ENCODE measurements at regions of chr20 and their contacts with region 1.

Region 1: DNA sequence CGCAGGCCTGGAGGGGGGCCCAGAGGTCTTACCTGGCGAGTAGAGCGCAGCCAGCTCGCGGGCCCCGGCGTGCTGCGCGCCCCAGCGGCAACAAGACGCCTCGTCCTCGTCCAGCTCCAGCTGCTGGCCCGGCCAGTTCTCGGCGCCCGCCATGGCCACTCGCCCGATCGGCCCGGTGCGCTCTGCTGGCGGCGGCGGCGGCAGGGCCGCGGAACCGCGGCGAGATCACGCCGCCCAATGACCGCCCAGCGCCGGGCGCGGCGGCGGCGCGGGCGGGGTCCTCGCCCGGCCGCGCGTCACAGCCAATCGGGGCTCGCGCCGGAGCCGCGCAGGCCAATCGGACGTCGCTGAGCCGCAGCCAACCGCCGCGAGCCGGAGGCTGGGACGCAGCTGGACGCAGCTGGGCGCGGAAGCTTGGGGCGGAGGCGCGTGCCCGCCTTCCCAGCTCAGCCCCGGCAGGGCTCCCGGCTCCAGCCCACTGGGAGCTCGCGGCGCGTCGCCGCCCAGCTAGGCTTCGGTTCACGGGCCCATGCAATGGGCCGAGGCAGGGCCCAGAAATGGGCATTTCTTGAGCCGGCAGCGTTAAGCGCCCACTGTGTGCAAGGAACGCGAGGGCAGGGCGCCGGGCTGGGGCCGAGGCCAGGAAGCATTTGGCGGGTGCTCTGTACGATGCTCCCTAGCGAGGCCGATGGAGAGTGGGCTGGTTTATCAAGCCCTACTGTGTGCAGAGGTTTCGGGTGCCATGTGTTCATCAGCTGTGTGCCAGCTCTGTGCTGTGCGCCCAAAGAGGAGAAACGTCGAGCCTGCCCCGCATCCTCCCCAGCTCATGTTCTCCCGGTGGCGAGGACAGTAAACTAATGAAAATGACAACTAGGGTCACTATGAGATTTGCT is at the start of gene PEDS1:
- DNase-seq: peak; percentile 85
- H3K4me3 Mint-ChIP-seq: peak within 1 kb of the TSS; percentile 87
- H3K27ac Mint-ChIP-seq: peak within 1 kb of the TSS; percentile 94
- H3K4me1 Mint-ChIP-seq: peaks cover 44% of the 10 kb centered on the region
- H3K27me3 Mint-ChIP-seq: no peaks in the 10 kb centered on the region
- CTCF ChIP-seq: no peak
- total RNA-seq, gene PEDS1: 26.0 and 30.5 TPM in 2 replicates

Region 2: DNA sequence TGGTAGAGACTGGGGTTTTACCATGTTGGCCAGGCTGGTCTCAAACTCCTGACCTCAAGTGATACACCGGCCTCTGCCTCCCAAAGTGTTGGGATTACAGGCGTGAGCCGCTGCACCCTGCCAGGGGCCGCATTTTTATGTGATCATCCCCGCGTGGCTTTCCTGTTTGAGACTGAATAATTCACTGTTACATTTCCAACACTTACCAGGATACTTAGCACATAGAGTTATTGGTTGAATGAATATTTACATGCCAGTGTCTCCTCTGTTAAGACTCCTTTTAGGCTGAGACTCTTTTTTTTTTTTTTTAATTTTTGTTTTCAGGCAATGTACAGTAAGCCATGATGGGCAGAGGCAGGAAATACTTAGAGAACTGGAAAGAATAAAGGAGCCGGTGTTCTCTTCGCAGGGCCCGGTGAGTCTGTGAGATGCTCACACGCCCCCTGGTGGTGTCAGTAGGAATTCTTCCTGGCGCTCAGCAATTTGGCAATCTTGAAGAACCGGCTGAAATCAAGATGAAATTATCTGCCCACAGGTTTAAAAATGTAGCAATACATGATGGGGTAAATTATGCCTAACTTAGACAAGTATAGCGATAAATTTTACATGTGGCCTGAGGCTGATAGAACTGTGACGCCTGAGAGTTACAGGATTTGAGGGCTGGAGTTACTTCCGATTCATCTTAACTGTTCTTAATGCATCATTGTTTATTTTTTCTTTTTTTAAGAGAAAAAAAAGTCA is 225.2 kb before region 1 on chr20:
- CTCF ChIA-PET with region 1: no interaction called
- POLR2A ChIA-PET with region 1: no interaction called
- intact Hi-C with region 1: no loop called
- DNase-seq: peak; percentile 84
- H3K4me3 Mint-ChIP-seq: no peak overlapping the region
- H3K27ac Mint-ChIP-seq: no peak overlapping the region
- H3K4me1 Mint-ChIP-seq: no peaks in the 10 kb centered on the region
- H3K27me3 Mint-ChIP-seq: no peaks in the 10 kb centered on the region
- CTCF ChIP-seq: peak; percentile 80

Region 3: GRCh38 chr20:50101281-50101680 is 52.5 kb before region 1 on chr20:
- CTCF ChIA-PET with region 1: interaction called, 10 read pairs
- POLR2A ChIA-PET with region 1: interaction called, 30 read pairs
- intact Hi-C with region 1: no loop called
- DNase-seq: no peak
- H3K4me3 Mint-ChIP-seq: no peak overlapping the region
- H3K27ac Mint-ChIP-seq: no peak overlapping the region
- H3K4me1 Mint-ChIP-seq: peaks cover 31% of the 10 kb centered on the region
- H3K27me3 Mint-ChIP-seq: no peaks in the 10 kb centered on the region
- CTCF ChIP-seq: no peak

Region 4: GRCh38 chr20:50138479-50139393 is 15.0 kb before region 1 on chr20:
- CTCF ChIA-PET with region 1: interaction called, 38 read pairs
- POLR2A ChIA-PET with region 1: interaction called, 92 read pairs
- intact Hi-C with region 1: no loop called
- DNase-seq: peak; percentile 38
- H3K4me3 Mint-ChIP-seq: peak overlapping the region; percentile 35
- H3K27ac Mint-ChIP-seq: peak overlapping the region; percentile 93
- H3K4me1 Mint-ChIP-seq: peaks cover 46% of the 10 kb centered on the region
- H3K27me3 Mint-ChIP-seq: no peaks in the 10 kb centered on the region
- CTCF ChIP-seq: no peak

Region 5: GRCh38 chr20:50200482-50201104 is 46.9 kb after region 1 on chr20:
- CTCF ChIA-PET with region 1: no interaction called
- POLR2A ChIA-PET with region 1: no interaction called
- intact Hi-C with region 1: no loop called
- DNase-seq: no peak
- H3K4me3 Mint-ChIP-seq: no peak overlapping the region
- H3K27ac Mint-ChIP-seq: peak overlapping the region; percentile 72
- H3K4me1 Mint-ChIP-seq: peaks cover 7% of the 10 kb centered on the region
- H3K27me3 Mint-ChIP-seq: no peaks in the 10 kb centered on the region
- CTCF ChIP-seq: no peak